GM12878 (cell line): ENCODE measurements at regions of chr3 and their contacts with region 1.

Region 1: GRCh38 chr3:55485211-55485791 is 1.8 kb downstream of the WNT5A start:
- DNase-seq: peak; percentile 32
- ATAC-seq: peak; percentile 75
- H3K4me3 ChIP-seq: peak overlapping the region; percentile 86
- H3K27ac ChIP-seq: no peak overlapping the region
- H3K4me1 ChIP-seq: peaks cover 18% of the 10 kb centered on the region
- H3K27me3 ChIP-seq: peaks cover 18 to 47% of the 10 kb centered on the region in 2 experiments
- CTCF ChIP-seq: peak; percentile 52 to 85 (median 76)
- EP300 ChIP-seq: no peak
- POLR2A ChIP-seq: no peak
- RAD21 ChIP-seq: peak; percentile 91

Region 2: DNA sequence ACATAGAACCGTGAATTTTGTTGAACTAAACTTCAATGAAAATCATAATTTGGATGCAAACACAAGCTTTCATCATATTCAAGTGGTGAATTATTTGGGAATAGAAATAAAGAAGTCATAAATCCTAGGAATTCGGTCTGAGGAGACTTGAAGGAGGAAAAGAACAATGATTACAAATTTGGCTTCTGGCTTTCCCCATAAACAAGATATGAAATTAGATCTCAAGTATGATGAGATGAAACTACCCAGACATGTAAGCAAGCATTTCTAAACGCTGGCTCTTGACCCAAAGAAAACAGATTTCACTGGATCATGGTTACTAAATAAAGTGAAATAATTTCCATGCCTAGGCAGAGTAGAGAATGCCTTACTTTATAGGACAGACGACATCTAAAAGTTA is 410.5 kb before region 1 on chr3:
- CTCF ChIA-PET with region 1: no interaction called
- POLR2A ChIA-PET with region 1: no interaction called
- RAD21 ChIA-PET with region 1: no interaction called
- SMC1A ChIA-PET with region 1: no interaction called
- in situ Hi-C with region 1: no loop called
- intact Hi-C with region 1: no loop called
- DNase-seq: no peak
- ATAC-seq: no peak
- H3K4me3 ChIP-seq: no peak overlapping the region
- H3K27ac ChIP-seq: no peak overlapping the region
- H3K4me1 ChIP-seq: no peaks in the 10 kb centered on the region
- H3K27me3 ChIP-seq: no peaks in the 10 kb centered on the region; a peak in 1 of 4 replicates
- CTCF ChIP-seq: no peak
- EP300 ChIP-seq: no peak
- POLR2A ChIP-seq: no peak
- RAD21 ChIP-seq: no peak

Region 3: DNA sequence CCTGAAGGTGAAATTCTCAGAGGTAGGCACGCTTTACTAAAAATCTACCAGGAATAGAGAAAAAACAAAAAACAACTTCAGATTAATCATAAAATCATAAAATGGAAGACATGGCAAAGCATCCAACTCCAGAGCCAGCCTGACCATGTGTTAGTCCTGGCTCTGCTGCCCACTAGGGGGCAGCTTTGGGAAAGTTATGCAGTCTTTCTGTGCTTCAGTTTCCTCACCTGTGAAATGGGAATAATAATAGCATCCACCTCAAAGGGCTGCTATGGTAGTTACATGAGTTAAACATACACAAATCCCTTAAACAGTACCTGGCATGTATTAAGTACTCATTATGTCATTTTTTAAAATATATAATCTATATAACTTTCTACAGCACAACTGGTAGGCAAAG is 50.5 kb before region 1 on chr3:
- CTCF ChIA-PET with region 1: interaction called, 4 read pairs
- POLR2A ChIA-PET with region 1: no interaction called
- RAD21 ChIA-PET with region 1: no interaction called
- SMC1A ChIA-PET with region 1: no interaction called
- in situ Hi-C with region 1: no loop called
- intact Hi-C with region 1: loop called (anchors 2 kb)
- DNase-seq: no peak
- ATAC-seq: peak; percentile 89
- H3K4me3 ChIP-seq: no peak overlapping the region
- H3K27ac ChIP-seq: no peak overlapping the region
- H3K4me1 ChIP-seq: no peaks in the 10 kb centered on the region
- H3K27me3 ChIP-seq: no peaks in the 10 kb centered on the region; a peak in 2 of 4 replicates
- CTCF ChIP-seq: peak; percentile 73 to 79 (median 74)
- EP300 ChIP-seq: no peak
- POLR2A ChIP-seq: no peak
- RAD21 ChIP-seq: peak; percentile 63

Region 4: DNA sequence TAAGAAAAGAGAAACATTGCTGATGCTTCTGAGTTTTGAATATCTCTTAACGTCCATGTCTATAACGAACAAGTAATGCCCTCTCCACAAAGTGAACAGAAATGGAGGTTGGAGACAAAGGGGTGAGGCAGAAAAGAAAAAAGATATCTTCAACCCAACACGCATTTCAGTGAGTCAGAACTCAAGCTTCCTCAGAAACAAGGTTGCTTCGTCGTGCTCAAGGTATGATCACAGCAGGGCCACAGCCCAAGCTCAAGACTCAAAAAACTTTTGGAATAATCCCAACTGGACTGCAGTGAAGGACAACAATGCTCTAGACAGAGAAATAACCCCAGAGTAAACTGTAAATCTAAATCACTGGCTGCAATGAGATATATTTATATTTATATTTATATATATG is 17.1 kb before region 1 on chr3:
- CTCF ChIA-PET with region 1: no interaction called
- POLR2A ChIA-PET with region 1: no interaction called
- RAD21 ChIA-PET with region 1: no interaction called
- SMC1A ChIA-PET with region 1: no interaction called
- in situ Hi-C with region 1: no loop called
- intact Hi-C with region 1: no loop called
- DNase-seq: no peak
- ATAC-seq: no peak
- H3K4me3 ChIP-seq: no peak overlapping the region
- H3K27ac ChIP-seq: no peak overlapping the region
- H3K4me1 ChIP-seq: no peaks in the 10 kb centered on the region
- H3K27me3 ChIP-seq: no peaks in the 10 kb centered on the region
- CTCF ChIP-seq: no peak
- EP300 ChIP-seq: no peak
- POLR2A ChIP-seq: no peak
- RAD21 ChIP-seq: no peak

Region 5: DNA sequence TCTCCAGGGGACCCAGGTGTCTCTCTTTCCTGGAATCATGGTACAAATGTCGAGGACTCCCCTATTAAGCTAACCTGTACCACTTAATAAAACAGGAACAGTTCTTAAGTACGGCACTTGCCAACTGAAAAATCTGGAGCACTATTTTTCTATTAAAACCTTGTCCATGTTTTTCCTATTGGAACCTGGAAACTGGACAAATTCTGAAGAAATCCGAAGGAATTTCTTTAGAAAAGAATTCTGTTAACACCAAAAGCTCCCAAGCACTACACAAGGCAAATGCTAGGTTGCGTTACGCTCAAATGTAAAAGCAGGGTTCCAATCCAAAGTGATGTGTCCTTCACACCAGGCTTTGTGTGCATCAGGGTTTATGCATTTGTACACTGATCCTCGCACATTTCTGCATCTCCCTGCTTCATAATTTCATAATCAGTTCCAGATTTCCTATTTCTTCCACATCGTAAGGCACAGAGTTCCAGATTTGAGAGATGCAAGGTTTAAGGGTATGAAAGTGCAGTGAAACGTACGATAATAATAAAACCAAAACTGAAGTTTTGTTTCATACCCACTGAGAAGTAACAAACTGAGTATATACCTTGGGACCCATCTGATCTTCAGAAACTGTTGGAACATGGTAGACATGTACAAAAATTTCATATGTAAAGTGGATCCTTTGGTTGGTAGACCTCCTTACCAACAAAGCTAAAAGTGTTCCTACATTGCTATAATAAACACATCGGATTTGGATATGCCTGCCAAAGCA is 133.9 kb after region 1 on chr3:
- CTCF ChIA-PET with region 1: no interaction called
- POLR2A ChIA-PET with region 1: no interaction called
- RAD21 ChIA-PET with region 1: no interaction called
- SMC1A ChIA-PET with region 1: no interaction called
- in situ Hi-C with region 1: no loop called
- intact Hi-C with region 1: no loop called
- DNase-seq: no peak
- ATAC-seq: peak; percentile 64
- H3K4me3 ChIP-seq: peak overlapping the region; percentile 18; the same call in 1 of the 2 replicates
- H3K27ac ChIP-seq: peak overlapping the region; percentile 75
- H3K4me1 ChIP-seq: peaks cover 41% of the 10 kb centered on the region
- H3K27me3 ChIP-seq: no peaks in the 10 kb centered on the region
- CTCF ChIP-seq: no peak
- EP300 ChIP-seq: no peak
- POLR2A ChIP-seq: no peak
- RAD21 ChIP-seq: no peak

Region 6: GRCh38 chr3:55629432-55629831 is 144.1 kb after region 1 on chr3:
- CTCF ChIA-PET with region 1: no interaction called
- POLR2A ChIA-PET with region 1: no interaction called
- RAD21 ChIA-PET with region 1: interaction called, 4 read pairs
- SMC1A ChIA-PET with region 1: no interaction called
- in situ Hi-C with region 1: no loop called
- intact Hi-C with region 1: loop called (anchors 5 kb)
- DNase-seq: no peak
- ATAC-seq: no peak
- H3K4me3 ChIP-seq: no peak overlapping the region
- H3K27ac ChIP-seq: no peak overlapping the region
- H3K4me1 ChIP-seq: peaks cover 14% of the 10 kb centered on the region
- H3K27me3 ChIP-seq: no peaks in the 10 kb centered on the region
- CTCF ChIP-seq: no peak
- EP300 ChIP-seq: no peak
- POLR2A ChIP-seq: no peak
- RAD21 ChIP-seq: no peak

Region 7: DNA sequence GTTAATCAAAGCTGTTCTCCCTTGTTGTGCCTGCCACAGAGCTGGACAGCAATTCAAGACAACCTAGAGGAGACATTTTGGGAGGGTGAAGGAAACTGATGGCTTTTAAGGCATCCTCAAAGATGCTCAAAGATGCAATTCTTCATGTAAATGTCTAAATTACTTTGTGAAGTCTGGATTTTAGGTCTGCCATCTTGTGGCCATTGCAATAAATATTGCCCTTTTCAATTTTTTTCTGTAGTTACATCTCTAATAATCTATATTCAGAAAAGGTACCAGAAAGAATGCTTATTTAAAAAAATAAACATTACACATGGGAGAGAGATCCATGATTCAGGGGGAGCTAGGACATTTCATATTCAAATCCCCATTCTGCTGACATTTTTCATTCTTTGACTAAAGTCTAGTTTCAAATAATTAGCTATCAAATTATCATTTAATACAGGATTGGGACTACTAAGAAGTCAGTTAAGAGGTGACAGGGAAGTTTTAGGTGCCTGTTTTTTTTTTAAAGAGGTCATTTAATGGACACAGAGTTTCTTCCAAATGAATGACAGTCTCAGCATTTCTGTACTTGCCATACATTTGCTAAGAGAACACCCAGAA is 261.6 kb after region 1 on chr3:
- CTCF ChIA-PET with region 1: interaction called, 8 read pairs
- POLR2A ChIA-PET with region 1: no interaction called
- RAD21 ChIA-PET with region 1: no interaction called
- SMC1A ChIA-PET with region 1: interaction called, 3 read pairs
- in situ Hi-C with region 1: no loop called
- intact Hi-C with region 1: loop called (anchors 1 kb)
- DNase-seq: no peak
- ATAC-seq: no peak
- H3K4me3 ChIP-seq: no peak overlapping the region
- H3K27ac ChIP-seq: no peak overlapping the region
- H3K4me1 ChIP-seq: no peaks in the 10 kb centered on the region
- H3K27me3 ChIP-seq: no peaks in the 10 kb centered on the region
- CTCF ChIP-seq: peak; percentile 32 to 47 (median 45); a peak in 4 of 6 replicates
- EP300 ChIP-seq: no peak
- POLR2A ChIP-seq: no peak
- RAD21 ChIP-seq: peak; percentile 48

Region 8: DNA sequence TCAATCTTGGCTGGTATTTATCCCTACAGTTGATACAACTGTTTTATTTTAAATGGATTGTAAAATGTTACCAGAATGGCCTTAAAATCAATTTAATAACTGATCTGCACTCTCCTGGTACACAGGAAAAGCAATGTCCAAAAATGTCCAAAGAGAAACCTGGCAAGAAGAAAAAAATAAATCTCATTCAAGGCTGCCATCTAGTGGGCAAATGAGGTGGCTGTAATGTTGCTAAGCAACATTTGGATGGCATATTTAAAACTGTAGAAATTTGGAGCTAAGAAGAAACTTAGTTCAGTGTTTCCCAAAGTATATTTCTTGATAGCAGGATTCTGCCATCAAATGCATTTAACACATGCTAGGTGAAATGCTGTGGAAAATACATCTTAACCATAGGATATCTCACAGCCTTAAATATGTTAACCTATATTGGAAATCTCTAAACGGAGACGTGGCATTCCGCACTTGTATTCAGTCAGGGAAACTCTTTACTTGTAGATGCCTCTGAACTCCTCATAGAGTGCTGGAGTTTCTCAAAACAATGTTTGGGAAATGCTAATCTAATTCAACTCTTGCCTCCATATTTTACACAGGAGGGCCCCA is 766.1 kb after region 1 on chr3:
- CTCF ChIA-PET with region 1: interaction called, 3 read pairs
- POLR2A ChIA-PET with region 1: no interaction called
- RAD21 ChIA-PET with region 1: interaction called, 4 read pairs
- SMC1A ChIA-PET with region 1: no interaction called
- in situ Hi-C with region 1: loop called (anchors 5 kb)
- intact Hi-C with region 1: loop called (anchors 5 kb)
- DNase-seq: peak; percentile 8
- ATAC-seq: peak; percentile 57; the same call in 2 of the 3 replicates
- H3K4me3 ChIP-seq: no peak overlapping the region
- H3K27ac ChIP-seq: no peak overlapping the region
- H3K4me1 ChIP-seq: no peaks in the 10 kb centered on the region
- H3K27me3 ChIP-seq: no peaks in the 10 kb centered on the region; a peak in 1 of 4 replicates
- CTCF ChIP-seq: peak; percentile 63 to 81 (median 75)
- EP300 ChIP-seq: no peak
- POLR2A ChIP-seq: no peak
- RAD21 ChIP-seq: peak; percentile 77